ENCODE measurements at regions of chrX and their contacts with region 1.

Region 1: DNA sequence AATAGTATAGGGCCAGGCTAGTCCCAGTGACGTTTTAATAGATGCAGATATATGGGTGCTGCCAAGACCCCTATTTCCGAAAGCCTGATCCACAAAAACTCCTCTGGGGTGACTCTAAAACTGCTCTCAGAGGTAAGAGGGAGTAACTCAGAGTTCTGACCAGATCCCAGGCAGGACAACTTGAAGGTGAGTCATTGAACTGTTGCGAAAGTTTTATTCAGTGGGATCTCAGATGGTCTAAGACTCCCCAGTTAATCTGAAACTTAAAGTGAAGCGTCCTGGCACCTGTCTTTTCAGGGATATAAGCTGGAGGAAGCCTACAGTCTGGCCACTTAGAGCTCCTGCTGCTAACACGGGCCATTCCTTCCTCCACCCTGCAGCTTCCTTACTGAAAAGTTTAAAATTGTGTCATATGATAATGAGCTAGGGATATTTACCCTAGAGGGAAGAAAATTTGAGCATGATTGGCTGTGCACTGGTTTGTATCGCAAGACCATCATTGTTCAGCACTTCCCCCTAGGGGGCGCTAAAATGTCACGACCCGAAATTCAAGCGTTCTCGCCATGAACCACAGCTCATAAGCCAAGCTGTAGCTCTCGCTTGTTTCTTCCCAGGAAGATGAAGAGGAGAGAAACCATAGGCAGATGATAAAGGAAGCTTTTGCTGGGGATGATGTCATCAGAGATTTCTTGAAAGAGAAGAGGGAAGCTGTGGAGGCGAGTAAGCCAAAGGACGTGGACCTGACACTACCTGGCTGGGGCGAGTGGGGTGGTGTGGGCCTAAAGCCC is 19.5 kb downstream of the UTP14A start:
- DNase-seq: peak; percentile 90
- H3K4me3 Mint-ChIP-seq: no peak overlapping the region
- H3K27ac Mint-ChIP-seq: no peak overlapping the region
- H3K4me1 Mint-ChIP-seq: peaks cover 5% of the 10 kb centered on the region
- H3K27me3 Mint-ChIP-seq: no peaks in the 10 kb centered on the region

Region 2: DNA sequence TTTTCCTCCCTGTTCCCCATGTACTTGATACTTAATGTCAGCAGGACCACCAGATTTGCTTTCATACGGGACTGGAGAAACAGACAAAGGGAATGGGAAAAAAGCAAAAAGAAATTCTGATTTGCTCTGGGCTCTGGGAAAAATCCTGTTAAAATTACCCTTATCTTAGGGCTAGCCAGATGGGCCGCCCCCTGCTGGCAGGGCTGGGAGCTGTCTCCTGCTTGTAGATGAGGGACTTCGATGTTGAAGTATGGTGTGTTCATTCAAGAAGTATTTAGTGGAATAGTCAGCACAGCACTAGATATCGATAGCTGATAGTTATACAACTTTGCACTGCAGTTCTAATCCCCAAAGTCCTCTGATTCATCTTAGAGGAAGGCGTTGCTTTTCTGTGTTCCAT is 102.7 kb after region 1 on chrX:
- intact Hi-C with region 1: loop called (anchors 1 kb)
- DNase-seq: peak; percentile 84
- H3K4me3 Mint-ChIP-seq: no peak overlapping the region
- H3K27ac Mint-ChIP-seq: no peak overlapping the region
- H3K4me1 Mint-ChIP-seq: peaks cover 10% of the 10 kb centered on the region
- H3K27me3 Mint-ChIP-seq: no peaks in the 10 kb centered on the region

Measured in activated CD4-positive, alpha-beta T cell treated with anti-CD3 and anti-CD28 coated beads, Interleukin-2, amount 10 ng/mL, durations not matched to agents 24 days and 14 days (primary cell).